Dorsolateral prefrontal cortex (tissue), 120 donors: ENCODE measurements at regions of chr9 and their contacts with region 1.

Region 1: DNA sequence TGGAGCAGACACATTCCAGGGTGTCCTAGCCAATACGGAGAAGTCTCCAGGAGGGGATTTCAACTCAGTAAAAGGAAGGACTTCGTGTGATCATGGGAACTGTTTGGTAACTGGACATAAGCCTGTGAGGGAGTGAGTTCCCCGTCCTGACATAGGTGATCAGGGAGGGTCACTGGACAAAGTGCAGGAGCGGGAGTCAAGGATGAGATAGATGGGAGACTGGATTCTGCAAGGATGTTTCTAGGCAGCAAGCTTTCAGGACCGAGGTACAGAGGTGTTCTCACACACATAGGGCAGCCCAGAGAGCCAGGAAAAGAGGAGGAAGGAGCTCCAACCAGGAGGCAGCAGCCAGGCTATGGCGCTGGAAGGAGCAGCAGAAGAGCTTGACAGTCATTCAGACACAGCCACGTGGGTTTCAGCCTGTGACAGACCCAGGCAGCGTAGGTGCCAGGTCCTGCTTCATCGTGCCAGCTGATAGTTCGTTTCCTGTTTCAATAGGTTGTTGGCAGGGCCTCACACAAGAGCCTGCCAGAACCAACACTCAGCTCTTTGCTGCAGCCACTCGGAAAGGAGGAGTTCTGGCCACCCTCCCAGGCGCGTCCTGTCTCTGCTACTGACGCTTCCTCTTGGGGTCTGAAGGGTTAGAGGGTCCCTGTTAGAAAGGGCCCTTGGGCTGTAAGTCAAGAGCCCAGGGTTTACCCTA is 84.1 kb downstream of the AMBP start:
- DNase-seq: peak; percentile 40 to 92 (median 80)
- H3K4me3 ChIP-seq: peak overlapping the region in 5 of 59 donors; percentile 8 to 28 (median 13)
- H3K27ac ChIP-seq: peak overlapping the region in 17 of 59 donors; percentile 0 to 80 (median 45)
- H3K27me3 ChIP-seq: no peaks in the 10 kb centered on the region
- CTCF ChIP-seq: peak in 5 of 56 donors; percentile 4 to 31 (median 19)

Region 2: DNA sequence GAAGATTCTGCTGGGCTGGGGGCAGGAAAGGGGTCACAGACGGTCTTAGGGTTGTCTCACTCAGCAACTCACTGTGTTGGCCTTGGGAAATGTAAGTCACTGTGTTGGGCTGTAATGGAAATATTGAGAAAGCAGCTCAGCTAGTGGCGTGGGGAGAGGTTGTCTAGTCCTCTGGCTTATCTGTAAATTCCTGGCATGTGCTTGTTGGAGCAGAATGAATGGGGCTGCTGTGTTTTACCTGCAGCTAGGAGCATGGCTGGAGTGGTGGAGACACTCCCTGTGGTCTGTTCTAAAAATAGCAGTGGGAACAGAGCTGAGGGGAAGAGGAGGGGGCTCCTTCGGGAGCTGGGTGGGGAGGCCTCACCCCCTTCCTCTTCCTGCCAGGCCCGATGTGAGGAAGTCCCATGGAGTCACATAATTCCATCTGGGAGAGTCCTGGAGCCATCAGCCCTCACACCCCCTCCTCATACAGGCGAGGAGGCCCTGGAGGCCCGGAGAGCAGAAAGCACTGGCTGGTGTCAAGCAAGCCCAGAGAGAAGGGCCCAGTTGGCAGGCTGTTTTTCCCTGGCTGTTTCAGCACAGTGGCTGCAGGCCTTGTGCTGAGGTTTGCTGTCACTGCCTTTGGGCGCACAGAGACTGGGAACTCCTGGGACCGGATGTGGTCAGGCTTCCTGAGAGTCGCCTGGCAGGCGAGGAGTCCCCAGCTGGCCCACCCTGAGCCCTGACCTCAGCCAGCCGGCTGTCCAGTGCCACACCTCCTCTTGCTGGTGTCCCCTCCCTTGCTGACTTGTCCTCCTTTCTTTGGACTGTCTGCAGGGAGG is 445.6 kb before region 1 on chr9:
- intact Hi-C with region 1: loop called in 1 of 2 experiments (anchors 10 kb)
- DNase-seq: peak in 6 of 10 donors; percentile 41 to 58 (median 53)
- H3K4me3 ChIP-seq: no peak overlapping the region
- H3K27ac ChIP-seq: peak overlapping the region in 56 of 59 donors; percentile 13 to 99 (median 74)
- H3K27me3 ChIP-seq: no peaks in the 10 kb centered on the region
- CTCF ChIP-seq: no peak

Region 3: DNA sequence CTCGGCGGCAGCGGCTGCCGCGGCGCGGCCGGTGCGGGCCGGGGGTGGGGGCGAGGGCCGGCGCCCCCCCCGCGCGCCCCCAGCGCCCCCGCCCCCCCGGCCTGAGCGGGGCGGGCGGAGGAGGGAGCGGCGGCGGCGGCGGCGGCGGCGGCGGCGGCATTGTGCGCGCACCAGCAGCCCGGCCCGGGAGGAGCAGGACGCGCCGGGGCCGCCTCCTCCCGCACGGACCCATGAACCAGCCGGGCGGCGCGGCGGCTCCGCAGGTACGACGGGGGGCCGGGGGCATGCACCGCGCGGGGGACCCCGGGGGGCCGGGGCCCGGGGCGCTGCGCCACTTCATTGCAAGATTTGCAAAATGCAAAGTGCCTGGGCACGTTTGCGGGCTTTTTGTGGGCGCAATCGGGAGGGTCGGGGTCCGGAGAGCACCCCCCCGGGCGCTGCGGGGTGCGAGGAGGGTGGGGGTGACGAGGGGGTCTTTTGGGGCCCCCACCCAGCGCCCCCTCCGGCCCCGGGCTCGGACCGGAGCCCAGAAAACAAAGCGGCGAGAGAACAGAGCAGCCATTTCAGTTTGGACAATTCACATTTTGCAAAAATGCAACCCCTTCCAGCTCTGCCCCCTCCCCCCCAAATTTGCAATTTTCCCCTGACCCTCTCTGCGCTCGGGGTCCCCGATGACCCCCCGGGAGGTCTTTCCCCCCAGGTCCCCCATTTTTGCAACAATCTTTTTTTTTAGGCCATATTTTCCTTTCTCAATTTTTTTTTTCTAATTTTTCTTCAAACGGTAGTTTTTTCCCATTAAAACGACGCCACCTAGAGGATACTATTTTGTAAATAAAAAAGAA is 117.6 kb before region 1 on chr9 and contains the start of gene ZNF618:
- intact Hi-C with region 1: loop called (anchors 2 to 10 kb)
- DNase-seq: peak in 4 of 10 donors; percentile 25 to 54 (median 47)
- H3K4me3 ChIP-seq: peak within 1 kb of the TSS; percentile 66 to 92 (median 83)
- H3K27ac ChIP-seq: peak within 1 kb of the TSS in 34 of 59 donors; percentile 12 to 86 (median 68)
- H3K27me3 ChIP-seq: no peaks in the 10 kb centered on the region
- CTCF ChIP-seq: peak in 54 of 56 donors; percentile 5 to 78 (median 59)
- total RNA-seq, gene ZNF618: 3.2 to 10.5 (median 6.8) TPM

Region 4: GRCh38 chr9:114098016-114098935 is 104.3 kb after region 1 on chr9:
- intact Hi-C with region 1: no loop called
- DNase-seq: peak in 1 of 10 donors; percentile 37
- H3K4me3 ChIP-seq: peak overlapping the region; percentile 7 to 69 (median 53)
- H3K27ac ChIP-seq: no peak overlapping the region
- H3K27me3 ChIP-seq: peaks cover 0 to 34% (median 5%) of the 10 kb centered on the region in 45 donors
- CTCF ChIP-seq: no peak